PC-3 (cell line): ENCODE measurements at regions of chr2 and their contacts with region 1.

Region 1: DNA sequence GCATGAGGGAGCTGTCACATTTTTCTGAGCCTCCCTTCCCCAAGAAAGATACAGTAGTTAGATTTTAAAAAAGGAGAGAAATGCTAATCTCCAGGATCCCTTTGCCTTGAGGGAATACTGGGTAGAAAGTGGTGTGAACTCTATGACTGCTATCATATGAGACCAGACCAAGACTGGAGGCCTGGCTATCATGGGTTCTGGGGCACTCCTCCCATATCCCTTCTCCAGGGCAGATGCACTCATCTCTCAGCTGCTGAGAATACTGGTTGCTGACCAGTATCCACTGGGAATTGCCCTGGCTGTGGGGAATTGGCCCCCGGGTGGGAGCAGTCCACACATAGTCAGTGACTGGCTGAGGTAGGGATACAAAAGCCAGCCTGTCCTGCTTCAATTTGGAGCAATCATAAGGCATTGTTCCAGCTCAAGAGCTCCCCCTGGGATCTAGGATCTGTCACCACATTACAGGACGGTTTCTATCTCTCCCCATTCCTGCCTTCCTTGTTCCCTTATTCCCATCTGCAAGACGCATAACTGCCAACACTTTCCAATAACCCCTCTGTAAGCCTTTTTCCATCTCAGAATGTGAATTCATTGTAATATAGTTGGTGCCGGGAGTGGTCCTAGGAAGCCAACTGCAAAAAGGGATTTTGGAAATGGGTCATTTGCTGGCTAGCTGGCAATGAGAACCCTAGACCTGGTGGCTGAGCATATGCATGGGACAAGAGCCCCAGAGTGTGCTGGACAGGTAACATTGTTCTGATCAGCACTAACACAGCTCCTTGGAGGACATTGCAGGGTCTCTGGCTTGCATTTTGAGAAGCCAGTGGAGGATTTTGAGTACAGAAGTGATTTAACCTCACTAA is 35.4 kb upstream of the REEP1 start:
- DNase-seq: peak; percentile 69
- ATAC-seq: peak; percentile 90
- H3K4me3 ChIP-seq: no peak overlapping the region
- H3K27ac ChIP-seq: no peak overlapping the region
- H3K4me1 ChIP-seq: no peaks in the 10 kb centered on the region
- H3K27me3 ChIP-seq: no peaks in the 10 kb centered on the region
- CTCF ChIP-seq: peak; percentile 76

Region 2: GRCh38 chr2:86140969-86141392 is 231.9 kb before region 1 on chr2:
- CTCF ChIA-PET with region 1: no interaction called
- POLR2A ChIA-PET with region 1: no interaction called
- intact Hi-C with region 1: loop called (anchors 10 kb)
- DNase-seq: no peak
- ATAC-seq: no peak
- H3K4me3 ChIP-seq: no peak overlapping the region
- H3K27ac ChIP-seq: no peak overlapping the region
- H3K4me1 ChIP-seq: no peaks in the 10 kb centered on the region
- H3K27me3 ChIP-seq: no peaks in the 10 kb centered on the region
- CTCF ChIP-seq: no peak

Region 3: DNA sequence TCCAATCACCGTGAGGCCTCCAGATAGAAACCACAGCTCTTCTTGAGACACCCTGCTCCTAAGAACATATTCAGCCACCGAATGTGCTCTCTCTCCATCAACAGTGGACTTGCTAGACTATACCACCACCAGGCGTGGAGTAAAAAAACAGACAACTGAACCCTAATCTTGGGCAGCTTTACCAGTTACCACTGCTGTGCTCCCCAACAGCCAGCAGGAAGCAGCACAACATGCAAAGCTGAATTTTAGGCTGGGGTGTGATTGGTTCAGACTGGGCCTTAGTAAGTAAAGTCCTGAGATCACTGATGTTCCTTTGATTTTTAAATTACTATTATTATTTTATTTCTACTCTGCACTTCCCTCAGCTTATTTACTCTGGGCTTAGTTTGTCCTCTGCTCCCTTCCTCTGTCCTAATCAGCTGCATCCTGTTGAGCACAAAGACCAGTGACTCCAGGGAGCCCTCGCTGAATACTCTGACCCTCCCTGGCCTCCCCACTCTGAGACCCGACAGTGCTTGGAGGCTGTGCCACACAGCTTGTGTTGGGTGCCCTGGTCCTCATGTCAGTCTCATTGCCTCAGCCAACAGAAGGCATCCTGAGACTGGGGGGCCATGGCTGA is 151.7 kb before region 1 on chr2:
- CTCF ChIA-PET with region 1: interaction called, 7 read pairs
- POLR2A ChIA-PET with region 1: no interaction called
- intact Hi-C with region 1: loop called (anchors 5 kb)
- DNase-seq: peak; percentile 58
- ATAC-seq: peak; percentile 70
- H3K4me3 ChIP-seq: no peak overlapping the region
- H3K27ac ChIP-seq: no peak overlapping the region
- H3K4me1 ChIP-seq: no peaks in the 10 kb centered on the region
- H3K27me3 ChIP-seq: no peaks in the 10 kb centered on the region
- CTCF ChIP-seq: peak; percentile 82

Region 4: GRCh38 chr2:86274918-86275275 is 98.0 kb before region 1 on chr2:
- CTCF ChIA-PET with region 1: no interaction called
- POLR2A ChIA-PET with region 1: no interaction called
- intact Hi-C with region 1: no loop called
- DNase-seq: no peak
- ATAC-seq: no peak
- H3K4me3 ChIP-seq: no peak overlapping the region
- H3K27ac ChIP-seq: no peak overlapping the region
- H3K4me1 ChIP-seq: peaks cover 6% of the 10 kb centered on the region; the same call in 1 of the 2 replicates
- H3K27me3 ChIP-seq: peaks cover 30% of the 10 kb centered on the region
- CTCF ChIP-seq: no peak

Region 5: DNA sequence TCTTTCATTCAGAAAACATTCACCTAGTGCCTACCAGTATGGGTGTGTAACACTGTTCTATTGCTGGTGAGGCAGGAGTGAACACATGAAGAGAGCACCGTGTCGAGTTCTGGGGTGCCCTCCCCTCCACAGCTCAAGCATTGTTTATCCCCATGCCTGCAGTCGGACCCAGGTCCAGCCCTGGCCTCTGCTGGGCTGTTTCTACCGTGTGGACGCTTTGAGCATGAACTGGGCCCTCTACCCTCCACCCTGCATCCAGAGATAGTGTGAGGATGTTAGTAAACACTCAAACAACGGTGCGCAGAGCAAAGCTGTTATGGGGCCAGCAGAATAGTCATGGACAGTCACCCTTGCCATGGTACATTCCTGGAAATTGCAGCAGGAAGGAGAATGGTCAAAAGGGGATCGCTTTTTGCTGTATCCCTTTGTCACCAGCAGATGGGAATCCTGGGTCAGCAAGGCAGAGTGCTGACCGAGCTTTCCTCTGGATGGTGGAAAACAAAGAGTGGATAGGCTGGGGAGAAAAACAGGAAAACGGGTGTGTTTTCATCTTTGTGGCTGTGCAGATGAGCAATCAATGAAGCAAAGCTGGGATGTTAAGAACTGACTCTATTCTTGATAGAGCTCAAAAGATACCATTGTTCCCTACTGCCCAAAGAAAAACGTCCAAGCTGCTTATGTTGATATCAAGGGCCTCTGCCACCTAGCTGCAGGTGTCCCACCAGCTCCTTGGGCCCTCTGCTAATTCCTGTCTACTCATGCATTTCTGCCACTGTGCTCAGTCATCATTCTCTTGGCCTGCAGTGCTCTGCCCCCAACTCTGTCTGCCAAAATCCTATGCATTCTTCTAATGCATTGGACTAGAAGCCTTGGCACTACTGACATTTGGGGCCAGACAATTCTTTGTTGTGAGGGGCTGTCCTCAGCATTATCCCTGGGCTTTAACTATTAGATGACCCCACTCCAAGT is 74.2 kb before region 1 on chr2:
- CTCF ChIA-PET with region 1: no interaction called
- POLR2A ChIA-PET with region 1: no interaction called
- intact Hi-C with region 1: no loop called
- DNase-seq: peak; percentile 16
- ATAC-seq: peak; percentile 70
- H3K4me3 ChIP-seq: no peak overlapping the region
- H3K27ac ChIP-seq: no peak overlapping the region
- H3K4me1 ChIP-seq: no peaks in the 10 kb centered on the region
- H3K27me3 ChIP-seq: peaks cover 22% of the 10 kb centered on the region; the same call in 1 of the 2 replicates
- CTCF ChIP-seq: peak; percentile 40; the same call in 1 of the 2 replicates